ENCODE measurements at regions of chr11 and their contacts with region 1.

Region 1: DNA sequence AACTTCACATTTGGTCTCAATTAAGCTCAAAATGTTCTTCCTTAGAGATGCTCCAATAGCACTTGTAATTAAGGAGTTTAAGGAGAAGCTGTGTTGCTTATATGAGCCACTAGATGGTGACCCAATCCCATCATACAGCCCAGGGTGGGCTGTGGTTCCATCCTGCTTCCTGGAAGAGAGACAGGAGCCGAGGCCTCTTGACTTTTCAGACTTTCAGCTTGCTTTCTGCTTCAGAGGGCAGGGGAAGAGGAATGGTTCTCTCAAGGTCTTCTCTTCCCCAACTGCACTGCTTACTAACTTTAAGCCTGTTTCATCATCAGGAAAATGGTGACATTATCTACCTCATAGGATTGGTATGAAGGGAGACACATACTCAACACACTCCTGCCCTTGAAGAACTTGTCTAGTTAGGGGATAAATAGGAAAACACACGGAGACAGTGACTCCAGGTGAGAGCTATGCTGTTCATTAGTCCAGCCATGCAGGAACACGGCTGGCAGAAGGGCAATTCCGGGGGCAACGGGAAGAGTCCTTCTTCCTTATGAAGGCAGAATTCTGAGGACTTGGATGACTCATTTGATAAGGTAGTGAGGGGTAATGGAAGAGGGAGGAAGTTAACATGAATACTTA is 20.1 kb downstream of the TMEM218 start:
- DNase-seq: peak; percentile 81
- H3K4me3 ChIP-seq: no peak overlapping the region
- H3K27ac ChIP-seq: peak overlapping the region; percentile 4
- H3K4me1 ChIP-seq: peaks cover 11% of the 10 kb centered on the region
- H3K27me3 ChIP-seq: no peaks in the 10 kb centered on the region
- CTCF ChIP-seq: peak; percentile 56 to 66
- POLR2A ChIP-seq: no peak

Region 2: DNA sequence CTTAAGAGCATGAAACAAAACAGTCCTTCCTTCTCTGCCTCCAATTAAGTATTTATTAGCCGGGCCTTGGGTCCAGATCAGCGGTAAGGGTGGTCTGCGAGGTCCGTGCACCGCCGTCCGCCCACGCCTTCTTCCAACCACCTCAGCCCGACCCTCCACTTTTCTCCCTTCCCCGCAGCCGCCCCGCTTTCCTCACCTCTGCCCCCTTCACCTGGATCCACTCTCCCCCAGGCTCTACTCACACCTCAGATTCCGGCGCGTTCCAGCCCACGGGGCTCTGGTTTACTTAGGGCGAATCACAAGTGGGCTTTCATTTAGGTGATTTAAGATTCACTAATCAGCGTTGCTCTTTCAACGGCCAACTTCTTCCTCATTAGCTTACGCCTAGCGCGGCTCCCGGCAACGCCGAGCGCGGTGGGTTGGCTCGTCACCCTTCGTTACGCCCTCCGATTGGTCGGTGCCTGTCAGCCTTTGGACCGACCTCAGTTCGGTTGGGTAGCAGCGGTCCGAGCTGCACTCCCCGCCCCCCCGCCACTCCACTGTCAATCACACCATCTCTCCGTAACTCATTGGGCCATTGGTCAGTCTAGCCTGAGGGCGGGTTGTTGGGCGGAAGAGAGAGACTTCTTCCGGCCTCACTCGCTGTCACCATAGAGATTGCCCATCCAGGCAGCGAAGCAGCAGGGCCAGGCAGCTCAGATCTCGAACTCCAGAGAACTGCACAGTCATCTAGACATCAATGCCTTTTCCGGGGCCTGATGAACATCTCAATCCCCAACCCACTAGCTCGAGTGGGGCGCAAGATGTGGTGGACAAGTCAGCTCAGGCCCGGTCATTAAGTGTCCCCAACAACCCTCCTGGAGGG is 20.2 kb after region 1 on chr11 and contains the start of gene TMEM218:
- CTCF ChIA-PET with region 1: interaction called, 17 read pairs
- POLR2A ChIA-PET with region 1: no interaction called
- dilution Hi-C with region 1: no loop called
- intact Hi-C with region 1: loop called (anchors 1 kb)
- DNase-seq: peak; percentile 100
- H3K4me3 ChIP-seq: peak within 1 kb of the TSS; percentile 57 to 85 (median 72)
- H3K27ac ChIP-seq: peak within 1 kb of the TSS; percentile 10
- H3K4me1 ChIP-seq: peaks cover 6% of the 10 kb centered on the region
- H3K27me3 ChIP-seq: peaks cover 0 to 1% of the 10 kb centered on the region in 2 experiments
- CTCF ChIP-seq: no peak
- POLR2A ChIP-seq: no peak
- total RNA-seq, gene TMEM218: 17.9 and 23.8 TPM in 2 replicates

Region 3: GRCh38 chr11:125123947-125124617 is 32.7 kb after region 1 on chr11:
- CTCF ChIA-PET with region 1: interaction called, 19 read pairs
- POLR2A ChIA-PET with region 1: no interaction called
- dilution Hi-C with region 1: no loop called
- intact Hi-C with region 1: no loop called
- DNase-seq: peak; percentile 46
- H3K4me3 ChIP-seq: no peak overlapping the region
- H3K27ac ChIP-seq: no peak overlapping the region
- H3K4me1 ChIP-seq: no peaks in the 10 kb centered on the region
- H3K27me3 ChIP-seq: peaks cover 15 to 16% of the 10 kb centered on the region in 2 experiments
- CTCF ChIP-seq: peak; percentile 37 to 57
- POLR2A ChIP-seq: no peak

Region 4: GRCh38 chr11:125224391-125225010 is 133.1 kb after region 1 on chr11:
- CTCF ChIA-PET with region 1: interaction called, 10 read pairs
- POLR2A ChIA-PET with region 1: no interaction called
- dilution Hi-C with region 1: no loop called
- intact Hi-C with region 1: loop called (anchors 1 kb)
- DNase-seq: peak; percentile 45
- H3K4me3 ChIP-seq: no peak overlapping the region
- H3K27ac ChIP-seq: no peak overlapping the region
- H3K4me1 ChIP-seq: no peaks in the 10 kb centered on the region
- H3K27me3 ChIP-seq: peaks cover 0 to 2% of the 10 kb centered on the region in 2 experiments
- CTCF ChIP-seq: peak in 1 of 2 donors; percentile 28
- POLR2A ChIP-seq: no peak

Region 5: DNA sequence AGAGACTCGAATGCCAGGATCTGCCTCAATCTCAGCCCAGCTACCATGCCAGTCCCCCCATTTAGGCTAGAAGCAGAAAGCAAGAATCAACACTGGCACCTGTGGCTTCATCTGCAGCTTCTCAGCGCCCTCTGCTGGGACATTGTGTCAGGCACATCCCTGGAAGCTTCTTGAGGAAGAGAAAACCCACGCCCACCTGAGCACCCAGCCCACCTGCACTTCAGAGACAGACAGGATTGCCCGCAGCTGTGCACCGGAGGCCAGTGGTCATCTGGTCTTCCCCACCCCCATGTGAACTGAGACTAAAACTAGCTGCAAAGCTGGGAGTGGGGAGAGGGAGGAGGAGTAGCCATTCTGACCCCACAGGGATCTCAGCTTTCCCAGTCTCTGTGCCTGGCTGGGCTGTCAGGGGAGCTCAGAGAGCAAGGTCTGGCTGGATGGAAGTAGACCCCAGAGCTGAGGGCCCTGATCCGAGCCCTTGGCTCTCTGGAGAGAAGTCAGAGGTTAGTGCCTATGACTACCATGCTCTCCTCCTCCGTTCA is 337.9 kb after region 1 on chr11:
- CTCF ChIA-PET with region 1: interaction called, 50 read pairs
- POLR2A ChIA-PET with region 1: no interaction called
- dilution Hi-C with region 1: no loop called
- intact Hi-C with region 1: no loop called
- DNase-seq: peak; percentile 59
- H3K4me3 ChIP-seq: no peak overlapping the region
- H3K27ac ChIP-seq: no peak overlapping the region
- H3K4me1 ChIP-seq: no peaks in the 10 kb centered on the region
- H3K27me3 ChIP-seq: no peaks in the 10 kb centered on the region
- CTCF ChIP-seq: peak; percentile 70 to 81
- POLR2A ChIP-seq: no peak

Measured in endothelial cell of umbilical vein (primary cell).